ENCODE measurements at regions of chr14 and their contacts with region 1.

Region 1: GRCh38 chr14:39666386-39666785 is 234.2 kb upstream of the FBXO33 start:
- DNase-seq: no peak
- CTCF ChIP-seq: no peak

Region 2: GRCh38 chr14:39683691-39684090 is 17.3 kb after region 1 on chr14:
- CTCF ChIA-PET with region 1: interaction called, 12 read pairs
- POLR2A ChIA-PET with region 1: no interaction called
- DNase-seq: no peak
- CTCF ChIP-seq: no peak

Region 3: GRCh38 chr14:39694341-39694740 is 28.0 kb after region 1 on chr14:
- CTCF ChIA-PET with region 1: no interaction called
- POLR2A ChIA-PET with region 1: no interaction called
- DNase-seq: no peak
- CTCF ChIP-seq: no peak

Measured in GM10248 (cell line).